ENCODE measurements at regions of chr18 and their contacts with region 1.

Region 1: DNA sequence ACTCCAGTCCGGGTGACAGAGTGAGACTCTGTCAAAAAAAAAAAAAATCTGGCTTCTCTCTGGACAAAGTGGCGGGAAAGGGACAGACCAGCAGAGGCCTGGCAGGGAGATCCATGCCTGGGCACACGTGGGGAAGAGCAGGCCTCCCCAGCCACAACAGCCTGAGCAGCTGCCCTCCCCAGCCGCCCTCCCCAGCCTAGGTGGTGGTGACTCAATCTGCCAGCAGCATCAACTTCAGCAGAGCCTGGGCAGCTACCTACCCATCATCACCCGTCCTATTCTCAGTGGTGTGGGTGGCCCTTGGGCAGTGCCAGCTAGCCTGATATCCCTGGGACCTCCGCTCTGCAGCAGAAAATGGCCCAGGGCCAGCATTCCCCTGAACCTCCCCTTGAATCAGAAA is 612.4 kb downstream of the FBXO15 start:
- DNase-seq: no peak
- H3K4me3 ChIP-seq: no peak overlapping the region
- H3K27me3 ChIP-seq: no peaks in the 10 kb centered on the region
- CTCF ChIP-seq: no peak

Region 2: DNA sequence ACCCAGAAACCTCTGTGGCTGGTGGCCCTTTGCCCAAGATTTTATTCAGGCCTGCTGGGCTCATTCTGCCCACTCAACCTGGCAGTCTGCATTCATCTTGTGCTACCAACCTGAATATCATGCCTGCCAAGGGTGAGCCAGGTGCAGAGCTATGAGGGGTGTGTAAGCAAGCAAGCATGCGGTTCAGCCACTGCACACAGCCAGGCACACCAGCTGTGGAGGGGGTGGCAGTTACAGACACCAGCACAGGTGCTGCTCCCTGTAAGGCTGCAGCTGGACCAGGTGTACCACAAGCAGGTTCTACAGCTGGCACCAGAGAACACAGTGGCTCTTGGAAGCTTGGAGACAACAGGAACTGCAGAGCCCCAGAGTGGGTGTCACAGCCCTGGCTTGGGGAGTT is 20.7 kb before region 1 on chr18:
- CTCF ChIA-PET with region 1: no interaction called
- POLR2A ChIA-PET with region 1: interaction called, 13 read pairs
- DNase-seq: no peak
- H3K4me3 ChIP-seq: no peak overlapping the region
- H3K27me3 ChIP-seq: no peaks in the 10 kb centered on the region
- CTCF ChIP-seq: no peak